Activated T-helper 1 cell treated with anti-CD3 and anti-CD28 coated beads, Interleukin-12 subunit alpha, Interleukin-12 subunit beta, Interleukin-2, Interleukin-4 antibody, amounts not matched to agents 30 ng/mL and 10 ng/mL and 1 ng/mL, durations not matched to agents 14 hours and 24 hours and 36 hours (primary cell): ENCODE measurements at regions of chr16 and their contacts with region 1.

Region 1: DNA sequence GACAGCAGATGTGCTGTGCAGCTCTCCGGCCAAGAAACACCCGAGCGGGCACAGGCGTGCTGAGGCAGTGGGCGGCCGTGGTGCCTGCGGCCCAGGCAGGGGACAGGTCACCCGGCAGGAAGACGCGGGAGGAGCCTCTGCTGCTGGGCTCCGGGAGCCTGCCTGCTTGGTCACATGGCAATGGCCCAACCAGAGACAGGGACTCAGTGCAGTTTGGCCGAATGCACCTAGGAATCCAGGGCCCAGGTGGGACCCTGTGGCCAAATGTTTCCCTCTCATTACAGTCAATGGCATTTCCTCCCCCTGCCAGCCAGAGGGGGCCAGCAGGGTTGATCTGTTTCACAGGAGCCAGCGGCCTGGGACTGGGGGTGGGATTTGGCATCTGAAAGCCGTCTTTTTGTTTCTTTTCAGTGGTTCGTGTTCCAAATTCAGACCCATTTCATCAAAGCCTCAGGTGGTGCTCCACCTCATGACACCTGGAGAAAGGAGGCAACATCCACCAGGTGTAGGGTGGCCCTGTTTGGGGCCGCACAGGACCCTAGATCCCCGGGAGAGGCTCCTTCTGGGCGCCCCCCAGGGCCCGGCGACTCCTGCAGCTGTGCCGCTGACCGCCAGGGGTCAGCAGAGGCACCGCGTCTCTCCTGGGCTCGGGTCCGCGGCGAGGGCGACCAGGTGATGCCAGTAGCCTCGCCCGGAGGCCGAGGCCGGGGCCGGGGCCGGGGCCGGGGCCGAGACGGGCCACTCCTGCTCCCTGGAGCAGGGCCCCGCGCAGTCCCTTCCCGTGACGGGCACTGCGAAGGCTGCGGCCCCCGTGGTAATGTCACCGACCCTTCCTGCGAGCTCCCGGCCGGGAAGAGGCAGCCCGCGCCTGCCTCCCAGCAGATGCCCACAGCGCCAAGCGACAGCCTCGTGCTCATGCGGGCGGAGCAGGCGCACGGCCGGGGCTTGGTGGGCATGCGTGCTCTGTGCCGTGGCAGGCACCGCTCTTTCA is 118.5 kb downstream of the C16orf78 start:
- DNase-seq: no peak
- H3K4me3 Mint-ChIP-seq: no peak overlapping the region
- H3K27ac Mint-ChIP-seq: no peak overlapping the region
- H3K4me1 Mint-ChIP-seq: no peaks in the 10 kb centered on the region
- H3K27me3 Mint-ChIP-seq: peaks cover 4% of the 10 kb centered on the region

Region 2: GRCh38 chr16:49592546-49593423 is 100.7 kb after region 1 on chr16:
- intact Hi-C with region 1: loop called (anchors 1 kb)
- DNase-seq: peak; percentile 5
- H3K4me3 Mint-ChIP-seq: no peak overlapping the region
- H3K27ac Mint-ChIP-seq: no peak overlapping the region
- H3K4me1 Mint-ChIP-seq: no peaks in the 10 kb centered on the region
- H3K27me3 Mint-ChIP-seq: peaks cover 3% of the 10 kb centered on the region

Region 3: DNA sequence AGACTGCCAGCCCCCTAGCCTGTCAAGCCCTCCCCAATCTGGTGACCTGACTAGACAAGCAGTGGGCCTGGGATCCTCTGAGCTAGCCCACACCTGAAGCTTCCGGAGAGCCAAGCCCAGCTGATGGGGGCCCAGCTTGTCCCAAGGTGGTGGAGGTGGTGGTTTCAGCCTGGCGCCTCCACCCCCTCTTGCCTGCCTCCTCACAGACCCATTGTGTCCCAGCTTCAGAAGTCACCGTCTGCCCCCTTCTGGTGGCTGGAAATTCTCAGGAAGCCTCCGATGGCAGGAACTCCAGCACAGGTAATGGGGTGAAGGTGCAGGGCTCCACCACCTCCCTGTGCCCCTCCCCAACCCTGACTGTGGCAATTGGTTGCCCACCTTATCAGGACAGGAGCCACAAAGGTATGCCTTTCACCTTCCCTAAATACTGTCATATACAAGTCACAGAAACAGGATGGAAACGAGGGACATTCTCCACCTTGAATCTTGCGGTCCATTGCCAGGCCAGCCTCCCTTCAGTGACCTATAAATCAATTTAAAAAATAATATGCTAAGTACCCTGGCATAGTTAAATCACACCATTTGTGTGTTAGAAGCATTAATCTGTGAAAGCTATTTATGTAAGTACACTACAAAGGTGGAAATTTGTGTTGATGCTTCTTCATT is 429.9 kb after region 1 on chr16:
- intact Hi-C with region 1: loop called (anchors 2 kb)
- DNase-seq: no peak
- H3K4me3 Mint-ChIP-seq: no peak overlapping the region
- H3K27ac Mint-ChIP-seq: no peak overlapping the region
- H3K4me1 Mint-ChIP-seq: no peaks in the 10 kb centered on the region
- H3K27me3 Mint-ChIP-seq: peaks cover 4% of the 10 kb centered on the region